Left ventricle myocardium inferior (tissue), 1 donor: ENCODE measurements at regions of chr6 and their contacts with region 1.

Region 1: DNA sequence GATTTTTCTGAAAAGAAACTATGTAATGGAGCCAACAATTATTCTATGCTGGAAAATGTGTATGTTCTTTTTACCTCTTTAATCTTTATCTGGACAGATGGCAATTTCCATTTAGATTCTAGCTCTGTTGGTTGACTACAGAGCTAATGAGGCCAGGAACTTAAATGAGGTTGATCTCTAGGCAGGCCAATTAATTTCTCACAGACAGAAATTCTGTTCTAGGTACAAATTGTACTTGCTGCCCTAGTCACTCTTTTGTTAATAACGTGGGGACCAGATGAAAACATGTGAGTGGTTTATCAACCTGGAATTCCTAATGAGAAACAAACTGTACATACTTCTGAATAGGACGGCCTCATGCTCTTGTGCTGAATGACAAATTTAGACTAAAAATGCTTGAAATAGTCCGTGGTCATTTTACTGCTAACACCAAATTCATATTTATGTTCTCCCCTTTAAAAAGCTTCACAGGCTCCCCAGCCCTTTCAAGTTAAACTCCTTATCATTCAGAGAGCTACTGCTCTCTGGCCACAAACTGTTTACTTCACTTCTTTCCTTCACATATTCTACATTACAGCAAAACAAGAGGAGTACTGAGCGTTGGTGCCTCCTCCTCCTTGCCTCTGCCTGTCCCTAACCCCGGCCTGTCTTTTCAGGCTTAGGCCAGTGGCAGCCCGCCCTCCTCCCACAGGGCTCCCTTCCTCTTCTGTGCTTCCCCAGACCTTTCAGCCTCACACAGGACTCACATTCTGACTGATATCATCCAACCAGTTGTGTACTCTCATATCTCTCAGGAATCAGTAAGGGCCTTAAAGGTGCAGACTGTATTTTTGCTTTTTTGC is 41.4 kb downstream of the DTNBP1 start:
- DNase-seq: peak; percentile 63
- H3K4me3 ChIP-seq: peak overlapping the region; percentile 20
- H3K27ac ChIP-seq: peak overlapping the region; percentile 84
- H3K4me1 ChIP-seq: peaks cover 35% of the 10 kb centered on the region
- H3K27me3 ChIP-seq: no peaks in the 10 kb centered on the region
- CTCF ChIP-seq: no peak

Region 2: GRCh38 chr6:14130435-14131075 is 1490.9 kb before region 1 on chr6:
- intact Hi-C with region 1: loop called (anchors 10 kb)
- DNase-seq: no peak
- H3K4me3 ChIP-seq: no peak overlapping the region
- H3K27ac ChIP-seq: no peak overlapping the region
- H3K4me1 ChIP-seq: peaks cover 16% of the 10 kb centered on the region
- H3K27me3 ChIP-seq: no peaks in the 10 kb centered on the region
- CTCF ChIP-seq: no peak

Region 3: GRCh38 chr6:15504581-15505350 is 116.7 kb before region 1 on chr6:
- intact Hi-C with region 1: loop called (anchors 10 kb)
- DNase-seq: peak; percentile 73
- H3K4me3 ChIP-seq: peak overlapping the region; percentile 57
- H3K27ac ChIP-seq: peak overlapping the region; percentile 87
- H3K4me1 ChIP-seq: peaks cover 77% of the 10 kb centered on the region
- H3K27me3 ChIP-seq: no peaks in the 10 kb centered on the region
- CTCF ChIP-seq: no peak

Region 4: DNA sequence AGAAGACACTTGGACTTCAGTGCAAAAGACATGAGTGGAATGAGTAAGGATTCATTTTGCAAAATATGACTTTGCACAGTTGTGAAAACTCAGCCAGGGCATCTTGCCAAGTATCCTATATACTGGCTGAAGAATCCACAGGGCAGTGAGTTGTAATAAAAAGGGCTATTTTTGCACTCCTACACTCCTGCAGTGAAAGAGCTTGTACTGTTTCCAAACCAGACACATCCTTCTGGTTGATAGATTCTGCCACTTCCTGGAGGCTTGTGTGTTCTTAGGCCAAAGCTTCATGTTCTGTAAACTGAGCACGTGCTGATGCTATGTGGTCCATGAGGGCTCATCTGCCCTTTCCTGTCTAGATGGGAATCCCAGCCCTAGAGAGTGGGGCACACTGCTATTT is 651.8 kb after region 1 on chr6:
- intact Hi-C with region 1: no loop called
- DNase-seq: no peak
- H3K4me3 ChIP-seq: no peak overlapping the region
- H3K27ac ChIP-seq: no peak overlapping the region
- H3K4me1 ChIP-seq: peaks cover 28% of the 10 kb centered on the region
- H3K27me3 ChIP-seq: no peaks in the 10 kb centered on the region
- CTCF ChIP-seq: no peak